Mammary epithelial cell (primary cell): ENCODE measurements at regions of chr9 and their contacts with region 1.

Region 1: GRCh38 chr9:126108240-126108639 is 218.4 kb upstream of the MVB12B start:
- DNase-seq: peak; percentile 12
- H3K4me3 ChIP-seq: no peak overlapping the region
- H3K27ac ChIP-seq: no peak overlapping the region
- H3K4me1 ChIP-seq: no peaks in the 10 kb centered on the region
- H3K27me3 ChIP-seq: peaks cover 14% of the 10 kb centered on the region
- CTCF ChIP-seq: no peak

Region 2: GRCh38 chr9:126069400-126069955 is 38.8 kb before region 1 on chr9:
- CTCF ChIA-PET with region 1: no interaction called
- dilution Hi-C with region 1: loop called (anchors 5 kb)
- in situ Hi-C with region 1: no loop called
- intact Hi-C with region 1: no loop called
- DNase-seq: no peak
- H3K4me3 ChIP-seq: no peak overlapping the region
- H3K27ac ChIP-seq: no peak overlapping the region
- H3K4me1 ChIP-seq: no peaks in the 10 kb centered on the region
- H3K27me3 ChIP-seq: no peaks in the 10 kb centered on the region
- CTCF ChIP-seq: no peak

Region 3: GRCh38 chr9:126398403-126399058 is 290.3 kb after region 1 on chr9:
- CTCF ChIA-PET with region 1: no interaction called
- dilution Hi-C with region 1: no loop called
- in situ Hi-C with region 1: no loop called
- intact Hi-C with region 1: no loop called
- DNase-seq: peak; percentile 46
- H3K4me3 ChIP-seq: no peak overlapping the region
- H3K27ac ChIP-seq: no peak overlapping the region
- H3K4me1 ChIP-seq: peaks cover 13% of the 10 kb centered on the region
- H3K27me3 ChIP-seq: no peaks in the 10 kb centered on the region
- CTCF ChIP-seq: peak; percentile 93 to 100